Left cardiac atrium (tissue), 4 donors: ENCODE measurements at regions of chr5 and their contacts with region 1.

Region 1: DNA sequence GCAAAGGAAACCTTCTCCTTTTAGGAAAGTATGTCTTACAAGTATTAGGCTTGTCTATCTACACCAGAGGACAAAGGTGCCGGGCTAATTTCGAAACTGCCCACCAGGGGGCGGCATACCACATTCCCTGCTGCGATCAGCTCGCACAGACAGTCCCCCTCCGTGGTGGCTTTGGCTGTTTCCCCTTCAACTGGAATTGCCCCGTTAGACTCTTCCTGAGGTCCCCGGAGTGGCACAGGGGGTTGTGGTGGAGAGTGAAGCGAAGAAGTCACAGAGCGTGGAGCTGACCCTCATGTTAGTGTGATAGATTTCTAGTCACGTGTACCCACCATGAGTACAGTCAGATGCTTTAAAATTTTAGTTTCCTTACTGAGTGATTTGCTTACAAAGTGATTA is 17.5 kb downstream of the PTTG1 start:
- DNase-seq: peak; percentile 85
- ATAC-seq: peak; percentile 94 to 96

Region 2: DNA sequence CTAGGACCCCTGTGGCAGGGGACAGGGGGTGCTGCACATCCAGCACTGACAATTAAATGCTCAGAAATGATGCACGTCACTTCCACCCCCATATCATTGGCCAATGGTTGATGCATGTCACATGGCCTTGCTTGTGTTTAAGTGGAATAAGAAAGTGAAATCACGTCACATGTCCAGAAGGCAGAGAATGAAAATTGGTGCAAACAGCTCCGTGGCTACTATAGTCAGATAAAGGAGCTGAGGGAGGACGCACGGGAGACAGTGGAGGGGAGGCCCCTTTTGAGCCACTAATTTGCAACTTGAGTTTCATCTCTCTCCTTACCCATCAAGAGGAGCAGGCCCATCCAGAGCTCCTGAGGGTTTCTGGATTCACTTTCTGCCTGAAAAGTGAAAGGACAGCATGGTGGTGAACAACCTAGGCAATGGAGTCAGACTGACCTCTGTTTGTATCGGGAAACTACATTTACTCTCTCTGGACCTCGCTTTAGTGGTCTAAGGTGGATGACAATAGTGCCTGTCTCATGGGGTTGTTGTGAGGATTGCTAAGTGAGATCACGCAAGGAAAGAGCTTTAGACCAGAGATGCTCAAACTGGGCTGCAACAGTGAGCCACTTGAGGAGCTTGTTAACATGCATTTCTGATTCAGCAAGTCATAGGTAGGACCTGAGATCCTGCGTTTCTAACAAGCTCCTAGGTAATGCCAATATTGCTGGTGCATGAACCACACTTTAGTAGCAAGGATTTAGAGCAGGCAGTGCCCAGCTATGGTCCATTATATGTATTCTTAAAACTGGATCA is 656.8 kb before region 1 on chr5:
- intact Hi-C with region 1: no loop called
- DNase-seq: no peak
- ATAC-seq: no peak

Region 3: GRCh38 chr5:160511280-160511929 is 72.2 kb after region 1 on chr5:
- intact Hi-C with region 1: loop called in 1 of 2 experiments (anchors 10 kb)
- DNase-seq: no peak
- ATAC-seq: no peak

Region 4: DNA sequence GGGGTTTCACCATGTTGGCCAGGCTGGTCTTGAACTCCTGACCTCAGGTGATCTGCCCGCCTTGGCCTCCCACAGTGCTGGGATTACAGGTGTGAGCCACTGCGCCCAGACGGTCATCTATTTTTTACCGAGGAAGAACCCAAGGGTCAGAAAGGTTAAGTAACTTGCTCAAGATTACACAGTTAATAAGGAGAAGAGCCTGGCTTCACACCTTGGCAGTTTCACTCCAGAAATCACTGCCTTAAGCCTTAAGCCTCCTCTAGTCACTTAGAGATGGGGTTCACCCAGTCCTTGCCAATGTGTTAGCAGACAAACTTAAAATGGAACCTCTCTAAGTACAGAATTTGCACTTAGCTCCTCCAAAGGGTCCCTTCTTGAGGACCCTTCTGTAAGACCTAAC is 98.7 kb after region 1 on chr5:
- intact Hi-C with region 1: no loop called
- DNase-seq: no peak
- ATAC-seq: no peak